ENCODE measurements at regions of chr1 and their contacts with region 1.

Region 1: GRCh38 chr1:226062558-226063223 is at the start of gene H3-3A:
- DNase-seq: peak; percentile 95 to 99 (median 98)
- ATAC-seq: peak; percentile 82 to 85 (median 83)
- H3K4me3 ChIP-seq: peak within 1 kb of the TSS; percentile 64 to 99
- H3K4me3 Mint-ChIP-seq: peak within 1 kb of the TSS; percentile 99 to 100 (median 100)
- H3K27ac ChIP-seq: peak within 1 kb of the TSS; percentile 95
- H3K27ac Mint-ChIP-seq: peak within 1 kb of the TSS; percentile 99 to 100
- H3K4me1 ChIP-seq: peaks cover 25 to 31% of the 10 kb centered on the region in 2 experiments
- H3K4me1 Mint-ChIP-seq: peaks cover 51 to 55% (median 51%) of the 10 kb centered on the region in 3 donors
- H3K27me3 ChIP-seq: no peaks in the 10 kb centered on the region
- H3K27me3 Mint-ChIP-seq: no peaks in the 10 kb centered on the region
- total RNA-seq, gene H3-3A: 340 to 391 (median 366) TPM

Region 2: GRCh38 chr1:225777583-225778336 is 284.9 kb before region 1 on chr1 and contains the start of gene SRP9:
- CTCF ChIA-PET with region 1: interaction called in 1 of 2 experiments, 3 read pairs
- POLR2A ChIA-PET with region 1: interaction called in 1 of 2 experiments, 12 read pairs
- DNase-seq: peak; percentile 97 to 100 (median 99)
- ATAC-seq: peak; percentile 94 to 96 (median 96)
- H3K4me3 ChIP-seq: peak within 1 kb of the TSS; percentile 72 to 98
- H3K4me3 Mint-ChIP-seq: no peak within 1 kb of the TSS
- H3K27ac ChIP-seq: peak within 1 kb of the TSS; percentile 99
- H3K27ac Mint-ChIP-seq: no peak within 1 kb of the TSS
- H3K4me1 ChIP-seq: peaks cover 26 to 43% of the 10 kb centered on the region in 2 experiments
- H3K4me1 Mint-ChIP-seq: peaks cover 42 to 47% (median 47%) of the 10 kb centered on the region in 3 donors
- H3K27me3 ChIP-seq: no peaks in the 10 kb centered on the region
- H3K27me3 Mint-ChIP-seq: no peaks in the 10 kb centered on the region
- total RNA-seq, gene SRP9: 74.1 to 152 (median 137) TPM

Region 3: DNA sequence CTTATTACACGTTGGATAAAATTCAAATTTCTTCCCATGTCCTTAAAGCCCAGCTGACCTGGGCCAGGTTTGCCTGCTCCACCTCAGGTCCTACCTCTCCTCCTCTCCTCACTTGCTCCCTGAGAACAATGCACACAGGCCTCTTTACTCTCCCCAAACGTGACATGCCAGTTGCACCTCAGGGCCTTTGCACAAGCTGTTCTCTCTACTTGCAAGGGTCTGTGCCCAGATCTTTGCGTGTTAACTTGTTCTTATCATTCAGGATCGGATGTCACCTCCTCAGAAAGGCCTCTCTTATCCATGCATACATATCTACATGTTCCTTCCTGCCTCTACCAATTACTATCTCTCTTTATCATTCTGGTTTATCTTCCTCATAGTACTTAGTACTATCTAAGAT is 159.1 kb before region 1 on chr1:
- CTCF ChIA-PET with region 1: no interaction called
- POLR2A ChIA-PET with region 1: no interaction called
- DNase-seq: no peak
- ATAC-seq: no peak
- H3K4me3 ChIP-seq: no peak overlapping the region
- H3K4me3 Mint-ChIP-seq: no peak overlapping the region
- H3K27ac ChIP-seq: no peak overlapping the region
- H3K27ac Mint-ChIP-seq: peak overlapping the region; percentile 47 to 73
- H3K4me1 ChIP-seq: peaks cover 7 to 18% of the 10 kb centered on the region in 2 experiments
- H3K4me1 Mint-ChIP-seq: peaks cover 24 to 43% (median 35%) of the 10 kb centered on the region in 3 donors
- H3K27me3 ChIP-seq: no peaks in the 10 kb centered on the region
- H3K27me3 Mint-ChIP-seq: no peaks in the 10 kb centered on the region

Region 4: DNA sequence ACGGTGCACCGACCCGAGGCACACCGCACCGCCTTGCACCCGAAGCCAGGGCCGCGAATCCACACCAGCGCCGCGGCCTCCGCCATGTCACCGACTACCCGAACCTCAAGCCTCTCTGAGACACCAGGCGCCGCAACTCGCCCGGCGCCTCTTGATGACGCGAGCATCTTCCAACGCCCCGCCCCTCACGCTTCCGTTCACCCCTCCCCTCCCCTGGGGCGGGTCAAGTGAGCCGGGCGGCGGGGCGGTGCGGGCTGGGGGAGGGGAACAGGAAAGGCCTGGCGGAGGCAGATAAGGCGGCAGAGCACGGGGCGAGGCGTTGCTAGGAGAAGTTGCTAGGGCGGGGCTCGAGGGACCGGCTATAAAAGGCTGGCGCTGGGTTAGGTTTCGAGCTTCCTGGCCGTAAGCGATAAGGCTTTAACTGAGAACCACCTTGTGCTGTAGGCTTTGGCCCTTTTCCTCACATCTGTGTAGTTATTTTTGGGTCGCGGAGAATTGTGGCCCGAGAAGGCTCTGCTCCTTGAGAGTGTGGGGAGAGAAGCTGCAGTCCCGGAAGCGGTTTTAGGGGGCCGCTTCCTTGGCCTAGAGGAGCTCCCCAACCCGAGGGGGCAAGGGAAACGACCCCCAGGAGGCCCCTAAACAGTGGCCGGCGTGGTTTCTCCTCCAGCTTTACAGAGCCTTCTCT is 63.3 kb before region 1 on chr1 and contains the start of gene SDE2:
- CTCF ChIA-PET with region 1: interaction called in 1 of 2 experiments, 38 read pairs
- POLR2A ChIA-PET with region 1: interaction called, 22 to 71 read pairs
- DNase-seq: peak; percentile 98 to 100 (median 100)
- ATAC-seq: peak; percentile 80 to 95 (median 90)
- H3K4me3 ChIP-seq: peak within 1 kb of the TSS; percentile 88 to 99
- H3K4me3 Mint-ChIP-seq: peak within 1 kb of the TSS; percentile 92 to 100 (median 100)
- H3K27ac ChIP-seq: peak within 1 kb of the TSS; percentile 99
- H3K27ac Mint-ChIP-seq: peak within 1 kb of the TSS; percentile 100
- H3K4me1 ChIP-seq: peaks cover 61 to 65% of the 10 kb centered on the region in 2 experiments
- H3K4me1 Mint-ChIP-seq: peaks cover 82 to 87% (median 86%) of the 10 kb centered on the region in 3 donors
- H3K27me3 ChIP-seq: no peaks in the 10 kb centered on the region
- H3K27me3 Mint-ChIP-seq: no peaks in the 10 kb centered on the region
- total RNA-seq, gene SDE2: 19.6 to 36.1 (median 21.8) TPM

Region 5: DNA sequence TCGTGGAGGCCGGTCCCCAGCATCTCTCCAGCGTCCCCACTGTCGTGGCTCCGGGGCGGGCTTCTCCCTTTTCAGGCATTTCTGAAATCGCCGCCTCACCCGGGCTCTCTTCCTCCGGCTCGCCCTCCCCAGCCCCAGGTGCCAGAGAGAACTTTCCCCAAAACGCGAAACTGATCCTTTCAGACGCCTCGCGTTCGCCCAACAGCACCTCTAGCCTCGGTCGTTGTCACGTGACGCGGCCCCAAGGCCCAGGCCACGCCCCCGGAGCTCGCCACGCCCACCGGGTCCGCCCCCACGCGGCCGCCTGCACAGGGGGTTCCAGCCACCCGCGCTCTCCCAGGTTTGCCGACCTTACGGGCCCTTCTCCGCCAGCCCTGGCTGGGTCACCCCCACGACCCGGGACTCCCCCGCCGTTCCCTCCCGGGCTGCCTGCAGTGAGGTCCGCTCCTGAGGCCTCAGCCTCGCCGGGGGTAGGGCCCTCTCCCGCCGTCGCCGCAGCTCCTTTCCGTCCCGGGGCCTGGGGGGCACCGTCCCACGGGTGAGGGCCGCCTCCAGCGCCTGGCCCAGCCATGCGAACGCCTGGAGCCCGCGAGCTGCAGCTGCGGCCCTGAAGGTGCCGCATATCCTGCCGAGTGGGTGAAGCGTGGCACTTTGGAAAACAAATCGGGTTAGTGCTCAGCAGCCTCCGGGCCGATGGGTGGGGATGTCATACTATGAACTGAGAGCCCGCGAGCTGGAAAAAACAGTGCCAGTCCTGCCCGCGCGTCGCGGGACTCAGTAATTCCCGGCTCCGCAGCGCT is 20.8 kb after region 1 on chr1:
- CTCF ChIA-PET with region 1: interaction called, 3 to 32 read pairs
- POLR2A ChIA-PET with region 1: interaction called, 3 to 4 read pairs
- DNase-seq: peak; percentile 72 to 95 (median 87)
- ATAC-seq: peak; percentile 91 to 98 (median 96)
- H3K4me3 ChIP-seq: peak overlapping the region; percentile 65 to 72
- H3K4me3 Mint-ChIP-seq: peak overlapping the region; percentile 85 to 91 (median 90)
- H3K27ac ChIP-seq: no peak overlapping the region
- H3K27ac Mint-ChIP-seq: peak overlapping the region; percentile 61 to 63
- H3K4me1 ChIP-seq: peaks cover 2 to 17% of the 10 kb centered on the region in 2 experiments
- H3K4me1 Mint-ChIP-seq: peaks cover 8 to 14% (median 10%) of the 10 kb centered on the region in 3 donors
- H3K27me3 ChIP-seq: no peaks in the 10 kb centered on the region
- H3K27me3 Mint-ChIP-seq: peaks cover 0 to 4% of the 10 kb centered on the region in 2 donors

Region 6: GRCh38 chr1:226121587-226122400 is 59.1 kb after region 1 on chr1:
- CTCF ChIA-PET with region 1: interaction called, 5 to 13 read pairs
- POLR2A ChIA-PET with region 1: interaction called in 1 of 2 experiments, 3 read pairs
- DNase-seq: peak; percentile 29 to 87 (median 62)
- ATAC-seq: peak; percentile 70 to 78 (median 76)
- H3K4me3 ChIP-seq: peak overlapping the region; percentile 48 to 51
- H3K4me3 Mint-ChIP-seq: peak overlapping the region; percentile 76 to 82 (median 79)
- H3K27ac ChIP-seq: peak overlapping the region; percentile 74
- H3K27ac Mint-ChIP-seq: peak overlapping the region in 1 of 2 donors; percentile 31
- H3K4me1 ChIP-seq: peaks cover 7 to 35% of the 10 kb centered on the region in 2 experiments
- H3K4me1 Mint-ChIP-seq: peaks cover 25 to 43% (median 29%) of the 10 kb centered on the region in 3 donors
- H3K27me3 ChIP-seq: peaks cover 0 to 18% of the 10 kb centered on the region in 2 experiments
- H3K27me3 Mint-ChIP-seq: no peaks in the 10 kb centered on the region

Region 7: GRCh38 chr1:226738421-226738994 is 675.8 kb after region 1 on chr1:
- CTCF ChIA-PET with region 1: no interaction called
- POLR2A ChIA-PET with region 1: interaction called in 1 of 2 experiments, 12 read pairs
- DNase-seq: peak in 20 of 35 experiments; percentile 27 to 61 (median 45)
- ATAC-seq: peak; percentile 1 to 32 (median 24)
- H3K4me3 ChIP-seq: peak overlapping the region; percentile 95 to 98
- H3K4me3 Mint-ChIP-seq: peak overlapping the region; percentile 85 to 95 (median 90)
- H3K27ac ChIP-seq: peak overlapping the region; percentile 90
- H3K27ac Mint-ChIP-seq: peak overlapping the region; percentile 96 to 98
- H3K4me1 ChIP-seq: peaks cover 36 to 42% of the 10 kb centered on the region in 2 experiments
- H3K4me1 Mint-ChIP-seq: peaks cover 36 to 49% (median 45%) of the 10 kb centered on the region in 3 donors
- H3K27me3 ChIP-seq: no peaks in the 10 kb centered on the region
- H3K27me3 Mint-ChIP-seq: no peaks in the 10 kb centered on the region

Measured in T-cell (primary cell).